Endothelial cell of umbilical vein (primary cell): ENCODE measurements at regions of chr1 and their contacts with region 1.

Region 1: GRCh38 chr1:1703796-1704195 is 11.2 kb upstream of the SLC35E2B start:
- DNase-seq: no peak
- H3K4me3 ChIP-seq: no peak overlapping the region
- H3K27ac ChIP-seq: no peak overlapping the region
- H3K4me1 ChIP-seq: no peaks in the 10 kb centered on the region
- H3K27me3 ChIP-seq: no peaks in the 10 kb centered on the region
- CTCF ChIP-seq: no peak
- POLR2A ChIP-seq: no peak

Region 2: GRCh38 chr1:1665800-1666251 is 38.0 kb before region 1 on chr1:
- CTCF ChIA-PET with region 1: no interaction called
- POLR2A ChIA-PET with region 1: no interaction called
- dilution Hi-C with region 1: no loop called
- intact Hi-C with region 1: no loop called
- DNase-seq: no peak
- H3K4me3 ChIP-seq: no peak overlapping the region
- H3K27ac ChIP-seq: no peak overlapping the region
- H3K4me1 ChIP-seq: no peaks in the 10 kb centered on the region
- H3K27me3 ChIP-seq: no peaks in the 10 kb centered on the region
- CTCF ChIP-seq: peak; percentile 49 to 59
- POLR2A ChIP-seq: no peak

Region 3: GRCh38 chr1:1748686-1749321 is 45.0 kb after region 1 on chr1:
- CTCF ChIA-PET with region 1: no interaction called
- POLR2A ChIA-PET with region 1: no interaction called
- dilution Hi-C with region 1: no loop called
- intact Hi-C with region 1: loop called (anchors 10 kb)
- DNase-seq: no peak
- H3K4me3 ChIP-seq: no peak overlapping the region
- H3K27ac ChIP-seq: no peak overlapping the region
- H3K4me1 ChIP-seq: no peaks in the 10 kb centered on the region
- H3K27me3 ChIP-seq: no peaks in the 10 kb centered on the region
- CTCF ChIP-seq: no peak
- POLR2A ChIP-seq: no peak